ENCODE measurements at regions of chr20 and their contacts with region 1.

Region 1: DNA sequence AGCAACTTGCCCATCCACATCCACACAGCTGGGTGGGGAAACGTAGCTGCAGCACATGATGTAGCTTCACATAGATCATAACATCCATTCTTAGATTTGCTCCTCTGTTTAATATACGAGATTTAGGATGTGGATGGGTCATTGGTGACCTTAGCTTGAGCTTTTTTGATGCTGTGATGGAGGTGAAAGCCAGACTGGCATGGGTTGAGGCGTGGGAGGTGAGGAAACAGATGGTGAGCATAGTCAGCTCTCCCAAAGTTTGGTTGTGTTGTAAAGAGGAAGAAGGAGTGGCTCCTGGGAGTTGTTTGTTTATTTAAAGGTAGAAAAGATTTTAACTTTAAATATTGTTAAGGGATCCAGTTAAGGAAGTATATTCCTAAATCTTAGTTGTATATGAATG is 5.3 kb downstream of the ARFGEF2 start:
- DNase-seq: no peak
- ATAC-seq: no peak
- H3K4me3 Mint-ChIP-seq: peak overlapping the region; percentile 29
- H3K27ac Mint-ChIP-seq: peak overlapping the region; percentile 68
- H3K4me1 Mint-ChIP-seq: peaks cover 59% of the 10 kb centered on the region
- H3K27me3 Mint-ChIP-seq: no peaks in the 10 kb centered on the region
- CTCF ChIP-seq: no peak

Region 2: GRCh38 chr20:48912065-48912762 is 14.6 kb before region 1 on chr20:
- CTCF ChIA-PET with region 1: interaction called, 3 read pairs
- POLR2A ChIA-PET with region 1: interaction called, 22 read pairs
- intact Hi-C with region 1: loop called (anchors 2 kb)
- DNase-seq: peak; percentile 55
- ATAC-seq: peak; percentile 97
- H3K4me3 Mint-ChIP-seq: peak overlapping the region; percentile 32
- H3K27ac Mint-ChIP-seq: peak overlapping the region; percentile 84
- H3K4me1 Mint-ChIP-seq: peaks cover 37% of the 10 kb centered on the region
- H3K27me3 Mint-ChIP-seq: no peaks in the 10 kb centered on the region
- CTCF ChIP-seq: no peak

Region 3: GRCh38 chr20:49100972-49101371 is 174.2 kb after region 1 on chr20:
- CTCF ChIA-PET with region 1: no interaction called
- POLR2A ChIA-PET with region 1: no interaction called
- intact Hi-C with region 1: no loop called
- DNase-seq: no peak
- ATAC-seq: peak; percentile 75
- H3K4me3 Mint-ChIP-seq: peak overlapping the region; percentile 46
- H3K27ac Mint-ChIP-seq: peak overlapping the region; percentile 64
- H3K4me1 Mint-ChIP-seq: peaks cover 31% of the 10 kb centered on the region
- H3K27me3 Mint-ChIP-seq: no peaks in the 10 kb centered on the region
- CTCF ChIP-seq: no peak